ENCODE measurements at regions of chr10 and their contacts with region 1.

Region 1: DNA sequence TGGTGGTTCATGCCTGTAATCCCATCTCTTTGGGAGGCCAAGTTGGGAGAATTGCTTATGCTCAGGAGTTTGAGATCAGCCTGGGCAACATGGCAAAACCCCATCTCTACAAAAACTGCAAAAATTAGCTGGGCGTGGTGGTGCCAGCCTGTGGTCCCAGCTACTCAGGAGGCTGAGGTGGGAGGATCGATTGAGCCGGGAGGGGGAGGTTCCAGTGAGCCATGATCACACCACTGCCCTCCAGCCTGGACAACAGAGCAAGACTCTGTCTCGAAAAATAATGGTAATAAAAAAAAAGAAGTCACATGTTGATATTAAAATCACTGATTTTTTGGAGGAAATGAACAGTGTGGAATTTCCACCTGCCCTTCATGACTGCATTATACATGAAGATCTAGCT is 15.8 kb downstream of the PHYH start:
- ATAC-seq: no peak
- H3K4me3 ChIP-seq: no peak overlapping the region
- H3K27ac ChIP-seq: no peak overlapping the region
- H3K4me1 ChIP-seq: no peaks in the 10 kb centered on the region

Region 2: DNA sequence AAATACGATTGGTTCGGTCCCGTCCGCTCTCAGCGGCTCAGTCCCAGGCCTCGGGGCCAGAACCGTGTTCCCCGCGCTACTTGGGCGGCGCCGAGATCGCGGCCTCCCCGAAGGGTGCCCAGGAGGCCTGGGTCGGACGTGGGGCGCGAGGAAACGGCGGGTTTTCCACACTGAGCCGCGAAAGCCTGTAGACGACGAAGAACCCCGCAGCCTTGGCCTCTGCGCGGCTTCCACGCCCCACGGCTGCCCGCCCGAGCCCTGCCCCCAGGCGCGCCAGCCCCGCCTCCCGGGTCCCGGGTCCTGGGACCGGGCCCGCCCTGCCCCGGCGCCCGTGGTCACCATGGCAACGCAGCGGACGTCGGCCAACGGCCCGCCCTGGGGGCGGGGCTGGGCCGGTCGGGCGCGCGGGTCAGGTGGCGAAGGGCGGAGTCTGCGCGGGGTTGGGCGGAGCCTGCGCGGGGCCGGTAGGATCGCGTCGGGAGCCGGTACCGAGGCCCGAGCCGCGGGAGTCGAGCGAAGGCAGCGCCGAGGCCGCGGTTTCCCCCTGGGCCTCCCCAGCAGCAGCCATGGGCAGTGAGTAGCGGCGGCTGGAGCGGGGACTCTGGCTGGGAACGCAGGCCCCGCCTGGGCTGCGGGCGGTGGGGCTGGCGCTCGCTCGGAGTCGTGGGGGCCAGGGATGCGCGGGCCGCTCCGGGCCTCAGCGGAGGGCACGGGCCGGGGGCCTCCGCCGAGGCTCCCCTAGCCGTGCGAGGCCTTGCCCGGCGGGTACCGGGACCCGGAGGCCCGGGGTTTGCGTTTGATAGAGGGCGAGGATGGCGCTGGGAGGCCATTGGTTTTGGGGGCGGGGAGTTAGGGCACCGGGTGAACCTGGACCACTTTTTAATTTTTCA is 1154.6 kb before region 1 on chr10 and contains the start of gene SEC61A2:
- in situ Hi-C with region 1: no loop called
- ATAC-seq: peak; percentile 87 to 96 (median 94)
- H3K4me3 ChIP-seq: peak within 1 kb of the TSS; percentile 71 to 89 (median 86)
- H3K27ac ChIP-seq: peak within 1 kb of the TSS; percentile 64 to 84
- H3K4me1 ChIP-seq: peaks cover 6% of the 10 kb centered on the region in 2 donors
- total RNA-seq, gene SEC61A2: 11.8 to 38.5 (median 27.2) TPM

Region 3: DNA sequence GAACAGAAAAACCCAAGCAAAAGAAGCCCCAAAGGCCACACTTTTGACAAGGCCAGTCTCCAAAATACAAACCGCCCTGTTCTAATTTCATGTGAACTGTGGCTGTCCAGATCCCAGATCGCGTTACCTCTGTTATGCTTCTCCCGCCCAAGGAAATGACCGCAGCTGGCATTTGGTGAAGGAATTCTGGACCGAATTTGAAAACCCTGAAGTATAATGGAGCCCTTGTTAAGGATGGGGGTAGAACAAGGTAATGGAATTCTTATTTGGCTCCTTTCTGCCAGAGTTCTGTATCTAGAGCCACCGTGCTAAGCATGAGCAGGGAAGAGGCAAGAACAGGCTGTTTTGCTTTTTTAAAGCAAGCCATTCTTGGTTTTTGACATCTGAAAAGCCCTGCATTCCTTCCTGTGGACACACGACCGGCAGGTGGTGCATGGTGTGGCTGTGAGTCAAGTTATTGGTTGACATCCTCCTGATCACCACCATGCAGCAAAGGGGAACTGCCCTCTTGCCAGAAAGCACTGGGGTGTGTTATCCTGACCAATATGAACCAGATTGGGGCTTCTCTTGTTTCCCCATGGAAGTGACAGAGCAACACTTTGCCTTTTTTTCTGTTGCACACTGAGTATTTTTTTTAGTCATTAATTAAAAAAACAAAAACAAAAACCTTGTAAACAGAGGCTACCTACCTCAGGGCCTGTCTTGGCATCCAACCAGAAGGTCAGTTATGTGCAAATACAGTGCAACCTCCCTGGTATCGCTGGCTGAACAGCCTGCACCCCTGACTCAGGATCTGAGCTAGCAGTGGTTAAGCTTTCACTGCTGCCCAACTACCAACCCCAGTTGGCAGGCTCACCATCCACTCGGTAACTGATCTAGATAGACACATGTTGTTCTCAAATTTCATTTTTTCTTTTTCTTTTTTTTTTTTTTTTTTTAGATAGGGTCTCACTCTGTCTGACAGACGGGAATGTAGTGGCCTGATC is 64.1 kb before region 1 on chr10:
- in situ Hi-C with region 1: loop called in 1 of 9 experiments (anchors 10 kb)
- ATAC-seq: peak in 3 of 8 experiments; percentile 41 to 76 (median 50)
- H3K4me3 ChIP-seq: no peak overlapping the region
- H3K27ac ChIP-seq: no peak overlapping the region
- H3K4me1 ChIP-seq: no peaks in the 10 kb centered on the region

Measured in motor neuron (in vitro differentiated cells).